Posterior cingulate gyrus (tissue), 11 donors: ENCODE measurements at regions of chr14 and their contacts with region 1.

Region 1: GRCh38 chr14:65170768-65171507 is 68.6 kb upstream of the MAX start:
- DNase-seq: peak in 9 of 10 donors; percentile 25 to 94 (median 63)

Region 2: DNA sequence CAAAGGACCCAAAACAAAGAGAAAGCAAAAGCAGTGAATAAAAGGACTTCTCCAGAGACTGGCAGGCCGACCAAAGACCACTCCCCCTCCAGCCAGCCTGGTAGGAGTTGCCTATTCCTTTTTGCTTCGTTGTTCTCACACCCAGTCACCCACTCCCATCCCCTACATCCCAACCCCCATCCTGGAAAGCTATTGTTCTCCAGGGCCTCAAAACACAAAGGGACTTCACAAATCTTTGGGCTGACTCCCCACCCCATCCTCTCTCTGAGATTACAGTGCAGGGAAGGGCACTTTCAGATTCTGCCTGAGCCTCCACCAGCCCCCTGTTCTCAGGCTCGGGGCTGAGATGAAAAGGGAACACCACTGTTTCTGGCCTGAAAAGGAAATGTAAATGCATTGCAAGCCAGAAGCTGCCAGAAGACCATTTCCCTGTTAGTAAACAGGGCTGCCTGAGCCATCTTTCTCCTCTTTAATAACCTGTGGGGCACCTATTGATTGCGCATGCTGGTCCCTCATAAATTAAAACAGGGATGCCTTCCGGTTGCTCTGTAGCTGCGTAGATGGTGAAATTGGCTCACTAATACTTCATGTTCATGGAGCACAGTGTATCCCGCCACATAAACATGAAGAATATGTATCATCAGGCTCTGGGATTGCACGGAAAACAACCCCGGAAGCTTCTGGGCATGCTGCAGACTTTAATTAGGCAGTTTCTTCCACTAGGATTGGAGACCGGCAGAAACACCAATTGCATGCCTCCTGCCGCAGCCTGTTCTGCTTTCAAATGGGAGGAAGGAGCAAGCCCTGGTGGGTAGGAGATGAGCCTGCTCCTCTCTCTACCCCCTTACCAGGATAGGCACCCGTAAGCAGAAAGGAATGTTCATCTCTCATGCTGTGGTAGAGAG is 111.3 kb after region 1 on chr14:
- intact Hi-C with region 1: loop called (anchors 5 kb)
- DNase-seq: peak in 8 of 10 donors; percentile 61 to 95 (median 73)

Region 3: DNA sequence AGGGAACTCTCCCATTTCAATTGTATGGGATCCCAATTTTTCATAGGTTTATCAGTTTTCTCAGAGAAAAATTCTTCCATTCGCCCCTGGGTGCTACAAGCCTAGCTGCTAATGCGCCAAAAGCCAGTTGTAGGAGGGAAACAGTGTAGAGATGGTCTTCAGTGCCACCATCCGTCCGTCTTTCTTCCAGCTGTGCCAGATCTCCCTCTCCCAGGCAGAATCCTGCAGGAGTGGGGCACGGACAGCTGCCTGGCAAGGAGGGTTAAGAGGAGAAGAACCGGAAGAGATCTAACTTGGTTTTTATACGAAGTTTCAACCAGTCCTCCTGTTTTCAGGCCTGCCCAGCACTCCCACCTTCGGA is 202.7 kb after region 1 on chr14:
- intact Hi-C with region 1: loop called (anchors 5 kb)
- DNase-seq: peak in 8 of 10 donors; percentile 14 to 93 (median 46)

Region 4: GRCh38 chr14:66228267-66228970 is 1057.5 kb after region 1 on chr14:
- intact Hi-C with region 1: no loop called
- DNase-seq: no peak